ENCODE measurements at regions of chr1 and their contacts with region 1.

Region 1: GRCh38 chr1:89598450-89599331 is 34.2 kb upstream of the LRRC8C start:
- DNase-seq: no peak
- ATAC-seq: peak; percentile 71

Region 2: GRCh38 chr1:89112871-89113613 is 485.6 kb before region 1 on chr1:
- intact Hi-C with region 1: no loop called
- DNase-seq: no peak
- ATAC-seq: no peak

Region 3: DNA sequence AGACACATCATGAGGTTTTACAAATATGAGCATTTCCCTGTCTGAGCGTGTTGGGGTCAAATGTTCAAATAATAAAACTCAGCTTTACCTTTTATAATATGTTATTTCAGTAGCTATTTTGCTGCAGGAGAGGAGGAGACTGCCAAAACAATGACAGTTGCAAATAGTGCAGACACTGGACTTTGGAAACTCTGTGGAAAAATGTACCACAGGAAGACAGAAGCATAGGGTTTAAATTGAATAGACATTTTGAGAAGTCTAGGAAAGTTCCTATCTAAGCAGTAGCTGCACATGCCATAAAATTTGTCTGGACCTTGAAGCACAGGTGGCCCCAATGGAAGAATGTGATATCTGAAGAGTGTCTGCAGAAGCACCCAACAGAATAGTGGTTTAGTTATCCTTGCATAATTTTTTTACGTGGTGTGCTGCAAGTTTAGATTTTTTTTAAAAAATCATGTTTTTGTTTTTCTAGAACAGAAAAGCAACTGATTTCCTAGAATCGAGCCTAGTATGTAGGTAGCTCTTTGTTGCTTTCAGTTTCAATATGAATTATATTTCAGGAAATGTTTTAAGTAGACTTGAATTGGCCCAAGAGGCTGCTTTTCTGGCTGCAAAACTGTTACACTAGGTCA is 312.0 kb before region 1 on chr1:
- intact Hi-C with region 1: no loop called
- DNase-seq: no peak
- ATAC-seq: peak; percentile 38

Region 4: DNA sequence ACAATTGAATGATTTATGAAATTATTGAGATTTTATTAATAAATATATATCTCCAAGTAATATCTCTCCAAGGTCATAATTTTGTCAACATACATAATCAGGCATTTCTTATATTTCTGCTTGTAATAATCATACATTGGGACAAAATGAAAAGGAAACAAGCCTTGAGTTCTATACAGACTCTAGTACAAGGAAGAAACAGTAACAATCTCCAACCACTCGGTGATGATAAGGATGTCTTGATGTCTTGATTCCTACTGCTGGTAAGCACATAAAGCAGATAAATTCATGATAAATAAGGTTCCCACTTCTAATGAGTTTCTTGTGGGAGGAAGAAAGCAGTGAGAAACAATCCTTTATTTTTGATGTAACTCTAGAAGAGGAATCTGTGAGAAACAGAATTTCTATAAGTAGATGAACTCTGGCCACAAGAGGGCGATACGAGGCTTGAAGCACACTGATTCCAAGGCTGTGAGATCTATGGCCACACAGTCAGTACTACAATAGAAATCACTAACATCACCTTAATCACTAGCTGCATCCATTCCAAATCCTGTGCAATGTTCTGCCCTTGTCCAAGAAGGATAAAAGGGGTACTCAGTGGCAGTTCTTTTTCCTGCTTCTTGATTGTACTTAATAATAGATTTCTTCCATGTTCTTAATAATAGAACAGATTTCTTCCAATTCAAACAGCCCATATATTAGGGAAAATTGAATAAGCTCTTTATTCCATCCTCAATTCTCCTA is 115.5 kb before region 1 on chr1:
- intact Hi-C with region 1: loop called (anchors 5 kb)
- DNase-seq: peak; percentile 60
- ATAC-seq: peak; percentile 75

Region 5: DNA sequence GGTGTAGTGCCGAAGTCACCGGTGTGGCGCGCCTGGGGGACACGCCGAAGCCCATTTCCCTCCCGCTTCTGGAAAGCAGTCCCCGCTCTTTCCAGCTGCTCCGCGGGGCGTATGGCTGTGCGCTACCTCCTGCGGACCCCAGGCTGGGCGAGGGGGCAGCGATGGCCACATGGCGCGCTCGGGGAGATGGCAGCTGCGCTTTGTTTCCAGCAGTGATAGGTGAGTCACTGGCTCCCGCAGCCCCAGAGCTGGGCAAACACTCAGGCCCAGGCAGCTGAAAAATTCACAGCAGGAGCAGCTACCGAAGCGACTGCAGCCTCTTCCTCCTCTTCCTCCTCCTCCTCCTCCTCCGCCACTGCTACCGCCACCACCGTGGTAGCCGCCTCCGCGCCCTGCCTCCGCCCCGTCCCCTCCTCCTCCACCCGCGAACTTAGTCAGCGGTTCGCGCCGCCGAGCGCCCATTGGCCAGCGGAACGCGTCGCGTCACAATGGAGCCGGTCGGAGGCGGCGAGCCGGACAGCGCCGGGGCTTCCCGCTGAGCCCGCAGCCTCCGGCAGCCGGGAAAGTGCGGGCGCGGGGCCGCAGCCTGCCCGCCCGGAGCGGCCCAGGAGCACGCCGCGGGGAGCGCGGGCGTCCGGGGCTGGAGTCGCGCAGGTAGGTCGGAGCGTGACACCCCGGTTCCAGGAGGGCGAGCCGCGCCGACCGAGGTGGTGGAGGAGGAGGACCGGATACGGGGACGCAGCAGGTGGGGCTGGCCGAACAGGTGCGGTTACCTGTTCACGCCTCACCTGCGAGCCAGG is 74.1 kb before region 1 on chr1 and contains the start of gene LRRC8B:
- intact Hi-C with region 1: loop called (anchors 10 kb)
- DNase-seq: peak; percentile 96
- ATAC-seq: peak; percentile 100
- total RNA-seq, gene LRRC8B: 2.5 TPM

Measured in left ventricle myocardium superior (tissue), 1 donor.